GM12878 (cell line): ENCODE measurements at regions of chr13 and their contacts with region 1.

Region 1: DNA sequence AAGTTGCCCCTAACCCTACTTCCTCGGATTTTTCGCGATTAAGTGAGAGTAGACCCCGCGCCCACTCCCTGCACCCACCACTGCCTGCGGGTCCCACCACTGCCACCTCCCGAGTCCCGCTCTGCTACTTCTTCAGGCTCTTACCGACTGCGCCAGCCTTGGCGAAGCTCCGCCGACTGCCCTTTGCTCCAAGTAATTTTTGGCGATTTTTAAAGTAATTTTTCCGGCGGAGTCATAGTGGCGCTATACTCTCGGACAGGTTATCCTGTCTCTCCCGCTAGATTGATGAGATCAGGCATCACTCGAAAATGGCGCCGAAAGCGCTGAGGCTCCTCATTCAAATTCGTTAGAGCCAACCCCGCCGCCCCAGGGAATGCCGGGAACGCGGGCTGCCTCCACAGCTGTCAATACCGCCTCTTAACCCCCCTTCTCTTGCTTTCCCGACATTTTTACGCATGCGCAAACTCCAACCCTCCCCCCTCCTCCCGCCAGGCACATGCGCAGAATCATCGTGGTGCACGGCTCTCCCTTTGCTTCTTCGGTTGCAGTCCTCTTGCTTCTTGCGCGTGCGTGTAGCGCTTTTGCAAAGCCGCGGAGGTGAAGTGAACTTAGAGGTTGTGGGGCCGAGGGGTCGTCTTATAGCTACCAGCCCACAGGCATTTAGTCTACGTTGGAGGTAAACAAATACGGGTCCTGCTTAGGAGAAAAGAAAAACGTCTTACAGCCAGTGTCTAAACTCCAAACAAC is 66.6 kb downstream of the KCNRG start:
- DNase-seq: peak; percentile 100
- ATAC-seq: peak; percentile 79
- H3K4me3 ChIP-seq: peak overlapping the region; percentile 92
- H3K27ac ChIP-seq: peak overlapping the region; percentile 82
- H3K4me1 ChIP-seq: peaks cover 4% of the 10 kb centered on the region; the same call in 1 of the 2 replicates
- H3K27me3 ChIP-seq: no peaks in the 10 kb centered on the region
- CTCF ChIP-seq: 0 out of 6 replicates have a peak, but pooled peaks of 2 of the 3 experiments have one; percentile 0 to 9
- EP300 ChIP-seq: 0 out of 4 replicates have a peak, but pooled peaks of 1 of the 2 experiments have one; percentile 9
- POLR2A ChIP-seq: peak; percentile 69
- RAD21 ChIP-seq: no peak

Region 2: GRCh38 chr13:48636550-48636949 is 1445.3 kb before region 1 on chr13:
- CTCF ChIA-PET with region 1: no interaction called
- POLR2A ChIA-PET with region 1: no interaction called
- RAD21 ChIA-PET with region 1: no interaction called
- SMC1A ChIA-PET with region 1: no interaction called
- in situ Hi-C with region 1: no loop called
- intact Hi-C with region 1: no loop called
- DNase-seq: no peak
- ATAC-seq: no peak
- H3K4me3 ChIP-seq: no peak overlapping the region
- H3K27ac ChIP-seq: no peak overlapping the region
- H3K4me1 ChIP-seq: no peaks in the 10 kb centered on the region
- H3K27me3 ChIP-seq: no peaks in the 10 kb centered on the region; a peak in 1 of 4 replicates
- CTCF ChIP-seq: no peak
- EP300 ChIP-seq: no peak
- POLR2A ChIP-seq: no peak
- RAD21 ChIP-seq: no peak

Region 3: DNA sequence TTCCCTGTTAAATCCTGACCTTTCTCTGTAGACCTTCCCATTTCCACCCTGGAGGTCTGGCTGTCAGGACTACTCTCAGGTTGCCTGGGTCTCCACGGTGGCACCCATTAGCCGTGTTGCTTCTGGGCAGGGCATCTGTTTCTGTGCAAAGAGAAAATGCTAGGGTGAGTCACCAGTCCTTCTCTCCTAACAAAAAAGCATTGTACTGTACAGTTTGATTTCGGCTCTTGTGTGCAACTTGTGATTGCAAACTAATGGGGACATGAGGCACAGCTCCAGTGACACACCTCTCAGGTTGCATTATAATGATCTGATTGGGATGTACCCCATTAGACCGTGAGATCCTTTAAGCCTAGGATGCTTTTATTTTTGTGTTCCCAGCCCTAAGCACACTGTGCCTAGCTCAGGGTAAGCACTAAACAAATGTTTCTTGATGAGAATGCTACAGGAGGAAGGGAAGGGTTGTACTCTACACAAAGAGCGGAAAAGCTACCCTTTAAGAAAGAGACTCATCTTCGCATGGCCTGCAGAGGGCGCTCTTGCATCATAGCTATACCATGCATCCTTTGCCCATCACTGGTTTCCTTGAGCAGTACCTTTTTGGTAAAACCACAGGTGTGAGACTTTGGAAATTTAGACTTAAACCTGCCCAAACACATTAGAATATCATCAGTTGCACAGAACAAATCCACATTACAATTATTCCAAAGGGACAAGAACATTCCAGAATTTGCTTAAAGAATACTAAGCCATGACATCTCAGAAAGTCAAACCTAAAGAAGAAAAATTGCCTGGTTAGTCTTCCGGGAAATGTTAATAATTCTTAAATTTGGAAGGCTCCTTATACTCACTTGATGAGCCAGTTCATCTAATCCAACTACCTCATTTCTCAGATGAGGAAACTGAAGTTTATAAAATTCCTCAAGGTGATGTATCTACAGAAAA is 105.3 kb before region 1 on chr13:
- CTCF ChIA-PET with region 1: interaction called, 41 read pairs
- POLR2A ChIA-PET with region 1: no interaction called
- RAD21 ChIA-PET with region 1: interaction called, 7 read pairs
- SMC1A ChIA-PET with region 1: interaction called, 26 read pairs
- in situ Hi-C with region 1: no loop called
- intact Hi-C with region 1: no loop called
- DNase-seq: peak; percentile 55
- ATAC-seq: peak; percentile 95
- H3K4me3 ChIP-seq: no peak overlapping the region
- H3K27ac ChIP-seq: no peak overlapping the region
- H3K4me1 ChIP-seq: no peaks in the 10 kb centered on the region
- H3K27me3 ChIP-seq: no peaks in the 10 kb centered on the region
- CTCF ChIP-seq: peak; percentile 86 to 95 (median 88)
- EP300 ChIP-seq: no peak
- POLR2A ChIP-seq: no peak
- RAD21 ChIP-seq: peak; percentile 99

Region 4: DNA sequence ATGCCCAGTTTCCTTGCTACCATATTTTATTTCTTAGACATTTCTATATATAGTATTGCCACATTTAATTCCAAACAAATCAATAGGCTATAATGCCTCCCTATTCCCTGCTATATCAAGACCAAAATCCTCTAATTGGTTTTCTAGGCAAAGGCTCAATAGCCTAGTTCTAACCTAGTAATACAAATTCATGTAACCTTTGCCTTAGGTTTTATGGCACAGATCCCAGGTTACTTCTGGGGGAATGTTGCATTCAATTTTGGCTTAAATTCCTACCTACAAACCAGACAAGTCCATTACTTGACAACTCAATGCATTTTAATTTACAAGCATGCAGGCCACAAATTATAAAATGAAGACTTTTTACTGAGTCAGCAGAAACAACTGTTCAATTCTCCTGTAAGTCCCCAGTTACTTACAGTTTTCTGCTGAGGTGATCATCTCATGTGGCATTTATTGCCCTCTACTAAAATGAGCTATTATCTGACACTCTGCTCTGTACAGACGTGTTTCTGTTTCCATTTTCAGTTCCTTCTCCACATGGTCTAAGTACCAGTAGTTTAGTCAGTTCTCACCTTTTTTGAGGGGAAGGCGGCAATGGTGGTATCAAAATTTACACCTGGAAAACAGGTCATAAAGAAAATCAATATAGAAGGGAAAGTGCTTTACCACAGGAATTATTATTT is 54.9 kb before region 1 on chr13:
- CTCF ChIA-PET with region 1: interaction called, 4 read pairs
- POLR2A ChIA-PET with region 1: interaction called, 3 read pairs
- RAD21 ChIA-PET with region 1: interaction called, 10 read pairs
- SMC1A ChIA-PET with region 1: interaction called, 4 read pairs
- in situ Hi-C with region 1: no loop called
- intact Hi-C with region 1: no loop called
- DNase-seq: peak; percentile 80
- ATAC-seq: peak; percentile 100
- H3K4me3 ChIP-seq: no peak overlapping the region
- H3K27ac ChIP-seq: no peak overlapping the region
- H3K4me1 ChIP-seq: peaks cover 17% of the 10 kb centered on the region
- H3K27me3 ChIP-seq: no peaks in the 10 kb centered on the region
- CTCF ChIP-seq: no peak
- EP300 ChIP-seq: peak; percentile 46 to 91; a peak in 3 of 4 replicates
- POLR2A ChIP-seq: no peak
- RAD21 ChIP-seq: no peak

Region 5: DNA sequence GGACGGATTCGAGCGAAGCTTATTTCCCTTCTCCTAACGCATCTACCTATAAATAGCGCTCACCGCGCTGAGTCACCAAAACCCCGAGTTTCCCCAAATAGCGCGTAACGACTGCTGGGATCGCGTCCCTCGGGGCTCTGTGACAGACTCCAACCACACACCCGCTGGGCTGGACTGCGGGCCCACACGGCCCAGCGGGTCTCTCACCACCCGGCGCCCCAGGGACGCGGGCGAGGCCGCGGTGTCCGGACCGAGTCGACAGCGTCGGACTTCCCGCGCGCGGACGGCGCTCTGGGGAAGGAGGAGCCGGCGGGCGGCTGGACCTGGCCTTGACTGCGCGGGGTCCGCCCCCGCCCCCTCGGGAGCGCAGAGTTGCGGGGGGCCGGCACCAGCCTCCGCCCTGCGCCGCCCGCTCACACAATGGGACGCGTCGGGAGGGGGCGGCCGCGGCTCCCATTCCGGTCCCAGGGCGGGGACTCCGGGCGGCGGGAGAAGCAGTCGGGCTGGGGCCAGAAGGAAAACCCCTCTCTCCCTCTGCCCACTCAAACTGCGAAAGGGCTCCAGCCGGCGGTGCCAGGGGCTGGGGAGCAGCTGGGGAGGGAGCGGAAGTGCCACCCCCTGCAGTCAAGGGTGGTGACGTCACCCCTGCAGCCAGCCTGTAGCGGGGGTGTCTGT is 42.1 kb after region 1 on chr13:
- CTCF ChIA-PET with region 1: interaction called, 4 read pairs
- POLR2A ChIA-PET with region 1: interaction called, 4 read pairs
- RAD21 ChIA-PET with region 1: interaction called, 3 read pairs
- SMC1A ChIA-PET with region 1: interaction called, 14 read pairs
- in situ Hi-C with region 1: no loop called
- intact Hi-C with region 1: loop called (anchors 1 kb)
- DNase-seq: no peak
- ATAC-seq: peak; percentile 80
- H3K4me3 ChIP-seq: peak overlapping the region; percentile 62
- H3K27ac ChIP-seq: no peak overlapping the region
- H3K4me1 ChIP-seq: peaks cover 30% of the 10 kb centered on the region
- H3K27me3 ChIP-seq: peaks cover 5 to 7% of the 10 kb centered on the region in 2 experiments; a peak in 3 of 4 replicates
- CTCF ChIP-seq: peak in 1 of 3 experiments; percentile 10; a peak in 1 of 6 replicates
- EP300 ChIP-seq: no peak
- POLR2A ChIP-seq: peak; percentile 65
- RAD21 ChIP-seq: no peak

Region 6: DNA sequence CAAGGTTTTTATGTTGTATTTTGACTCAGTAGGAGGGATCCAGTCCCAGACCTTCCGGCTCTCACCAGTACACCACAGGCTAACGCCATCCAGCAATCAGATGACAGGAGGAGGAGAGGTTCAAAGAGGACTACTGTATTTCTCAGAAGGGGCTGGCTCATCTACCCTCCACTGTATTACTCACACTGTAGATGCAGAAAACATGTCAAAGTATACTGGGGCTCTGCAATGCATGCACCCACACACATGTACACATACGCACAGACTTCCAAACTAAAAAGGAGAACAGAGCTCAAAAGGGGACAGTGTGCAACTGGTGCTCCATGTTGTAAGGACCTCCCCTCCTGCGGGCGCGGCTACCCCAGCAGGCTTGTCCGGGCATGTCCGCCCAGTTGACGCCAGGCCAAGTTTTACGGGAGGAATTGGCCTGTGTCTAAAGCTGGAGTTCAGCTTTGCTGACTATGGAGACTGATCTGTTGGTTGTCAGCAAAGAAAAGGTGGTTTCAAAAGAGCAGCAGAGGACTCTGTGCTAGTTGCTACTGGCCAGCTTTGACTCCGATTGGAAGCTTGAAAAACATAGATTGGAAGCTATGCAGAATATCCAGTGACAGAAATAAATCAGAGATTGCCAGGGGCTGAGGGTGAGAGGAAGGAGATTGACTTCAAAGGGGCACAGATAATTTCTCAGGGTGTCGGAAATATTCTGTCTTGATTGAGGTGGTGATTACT is 447.5 kb after region 1 on chr13:
- CTCF ChIA-PET with region 1: interaction called, 6 read pairs
- POLR2A ChIA-PET with region 1: no interaction called
- RAD21 ChIA-PET with region 1: interaction called, 5 read pairs
- SMC1A ChIA-PET with region 1: interaction called, 8 read pairs
- in situ Hi-C with region 1: no loop called
- intact Hi-C with region 1: loop called (anchors 5 kb)
- DNase-seq: no peak
- ATAC-seq: no peak
- H3K4me3 ChIP-seq: no peak overlapping the region
- H3K27ac ChIP-seq: no peak overlapping the region
- H3K4me1 ChIP-seq: no peaks in the 10 kb centered on the region
- H3K27me3 ChIP-seq: peaks cover 2 to 5% of the 10 kb centered on the region in 2 experiments; a peak in 3 of 4 replicates
- CTCF ChIP-seq: no peak
- EP300 ChIP-seq: no peak
- POLR2A ChIP-seq: no peak
- RAD21 ChIP-seq: no peak

Region 7: DNA sequence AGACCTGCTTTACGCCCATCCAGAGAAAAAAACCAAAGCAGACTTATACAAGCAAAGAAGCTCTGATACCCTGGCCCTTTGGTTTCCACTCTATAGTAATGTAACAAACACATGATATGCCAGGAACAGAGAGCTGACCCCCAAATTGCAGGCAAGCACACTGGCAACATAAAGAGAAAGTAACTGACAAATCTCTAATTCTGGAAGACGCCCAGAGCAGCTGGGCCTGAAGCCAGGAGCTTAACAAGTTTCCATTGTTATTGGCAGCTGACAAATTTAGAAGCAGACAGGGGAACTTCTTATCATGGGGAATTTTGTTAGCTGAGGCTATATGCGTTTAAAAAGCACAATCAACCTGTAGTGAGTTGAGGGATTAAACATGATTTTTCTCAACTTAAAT is 603.6 kb after region 1 on chr13:
- CTCF ChIA-PET with region 1: no interaction called
- POLR2A ChIA-PET with region 1: no interaction called
- RAD21 ChIA-PET with region 1: no interaction called
- SMC1A ChIA-PET with region 1: no interaction called
- in situ Hi-C with region 1: no loop called
- intact Hi-C with region 1: no loop called
- DNase-seq: no peak
- ATAC-seq: peak; percentile 58
- H3K4me3 ChIP-seq: no peak overlapping the region
- H3K27ac ChIP-seq: no peak overlapping the region
- H3K4me1 ChIP-seq: peaks cover 6% of the 10 kb centered on the region
- H3K27me3 ChIP-seq: no peaks in the 10 kb centered on the region
- CTCF ChIP-seq: no peak
- EP300 ChIP-seq: no peak
- POLR2A ChIP-seq: no peak
- RAD21 ChIP-seq: no peak

Region 8: GRCh38 chr13:51070005-51070649 is 988.3 kb after region 1 on chr13:
- CTCF ChIA-PET with region 1: interaction called, 7 read pairs
- POLR2A ChIA-PET with region 1: no interaction called
- RAD21 ChIA-PET with region 1: no interaction called
- SMC1A ChIA-PET with region 1: interaction called, 3 read pairs
- in situ Hi-C with region 1: loop called (anchors 10 kb)
- intact Hi-C with region 1: loop called (anchors 10 kb)
- DNase-seq: peak; percentile 30
- ATAC-seq: peak; percentile 95
- H3K4me3 ChIP-seq: no peak overlapping the region
- H3K27ac ChIP-seq: no peak overlapping the region
- H3K4me1 ChIP-seq: no peaks in the 10 kb centered on the region
- H3K27me3 ChIP-seq: no peaks in the 10 kb centered on the region; a peak in 2 of 4 replicates
- CTCF ChIP-seq: peak; percentile 92 to 97 (median 96); a peak in 5 of 6 replicates
- EP300 ChIP-seq: no peak
- POLR2A ChIP-seq: no peak
- RAD21 ChIP-seq: peak; percentile 97